ENCODE measurements at regions of chr4 and their contacts with region 1.

Region 1: DNA sequence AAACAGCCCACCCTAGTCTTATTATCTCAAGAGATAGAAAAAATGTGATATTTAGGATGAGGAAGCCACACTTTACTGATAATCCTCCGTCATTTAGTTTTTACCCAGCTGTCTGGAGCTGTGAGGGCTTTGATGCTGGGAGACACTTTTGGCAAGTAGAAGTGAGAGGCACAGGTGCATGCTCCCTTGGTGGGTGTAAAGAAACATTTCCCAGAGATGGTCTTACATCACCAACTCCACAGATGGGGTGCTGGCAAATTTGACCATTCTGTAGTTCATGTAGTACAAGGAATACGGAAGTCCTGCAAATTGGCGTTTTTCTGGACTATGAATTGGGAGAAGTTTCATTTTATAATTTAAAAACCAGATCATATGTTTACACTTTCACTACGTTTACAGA is 28.5 kb downstream of the TRIM61 start:
- DNase-seq: no peak
- ATAC-seq: no peak
- H3K4me3 ChIP-seq: no peak overlapping the region
- H3K4me3 Mint-ChIP-seq: no peak overlapping the region
- H3K27ac ChIP-seq: no peak overlapping the region
- H3K27ac Mint-ChIP-seq: no peak overlapping the region
- H3K4me1 ChIP-seq: no peaks in the 10 kb centered on the region
- H3K4me1 Mint-ChIP-seq: no peaks in the 10 kb centered on the region
- H3K27me3 ChIP-seq: peaks cover 0 to 15% (median 7%) of the 10 kb centered on the region in 4 experiments
- H3K27me3 Mint-ChIP-seq: peaks cover 54% of the 10 kb centered on the region
- CTCF ChIP-seq: no peak

Region 2: DNA sequence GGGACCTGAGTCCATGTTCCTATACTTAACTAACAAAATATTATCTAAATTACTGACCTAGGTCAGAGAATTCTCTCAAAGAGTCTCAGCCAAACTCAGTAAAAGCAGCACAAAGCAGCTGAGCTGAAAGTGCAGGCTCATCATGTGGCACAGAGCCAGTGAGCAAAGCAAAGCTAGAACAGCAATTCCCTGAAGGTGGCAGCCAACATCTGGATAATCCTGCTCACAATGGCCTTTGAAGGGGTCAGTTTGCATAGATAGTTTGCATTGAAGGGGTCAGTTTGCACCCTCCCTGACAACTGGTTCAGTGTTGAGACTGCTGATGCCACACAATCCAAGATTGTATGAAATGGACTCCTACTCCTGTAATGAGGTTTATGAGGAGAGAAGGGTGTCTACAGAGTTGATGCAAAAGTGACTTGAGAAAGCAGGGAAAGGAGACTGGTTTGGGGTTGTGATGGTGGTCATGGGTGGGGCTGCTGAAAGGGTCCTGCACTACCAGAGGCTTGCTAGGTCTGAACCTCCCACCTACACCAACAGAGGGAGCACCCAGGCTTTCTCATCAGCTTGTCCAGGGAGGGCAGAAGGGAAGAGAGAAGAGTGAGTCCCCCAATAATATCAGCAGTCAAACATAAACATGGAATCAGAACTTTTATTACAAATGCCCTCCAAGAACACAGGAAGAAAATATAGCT is 11.3 kb before region 1 on chr4:
- CTCF ChIA-PET with region 1: no interaction called
- POLR2A ChIA-PET with region 1: no interaction called
- intact Hi-C with region 1: loop called (anchors 1 kb)
- DNase-seq: no peak
- ATAC-seq: no peak
- H3K4me3 ChIP-seq: no peak overlapping the region
- H3K4me3 Mint-ChIP-seq: no peak overlapping the region
- H3K27ac ChIP-seq: no peak overlapping the region
- H3K27ac Mint-ChIP-seq: no peak overlapping the region
- H3K4me1 ChIP-seq: no peaks in the 10 kb centered on the region
- H3K4me1 Mint-ChIP-seq: no peaks in the 10 kb centered on the region
- H3K27me3 ChIP-seq: peaks cover 0 to 3% (median 1%) of the 10 kb centered on the region in 4 experiments
- H3K27me3 Mint-ChIP-seq: peaks cover 35% of the 10 kb centered on the region
- CTCF ChIP-seq: no peak

Region 3: GRCh38 chr4:165505991-165506837 is 557.2 kb after region 1 on chr4:
- CTCF ChIA-PET with region 1: no interaction called
- POLR2A ChIA-PET with region 1: no interaction called
- intact Hi-C with region 1: no loop called
- DNase-seq: no peak
- ATAC-seq: no peak
- H3K4me3 ChIP-seq: no peak overlapping the region
- H3K4me3 Mint-ChIP-seq: no peak overlapping the region
- H3K27ac ChIP-seq: no peak overlapping the region
- H3K27ac Mint-ChIP-seq: no peak overlapping the region
- H3K4me1 ChIP-seq: no peaks in the 10 kb centered on the region
- H3K4me1 Mint-ChIP-seq: no peaks in the 10 kb centered on the region
- H3K27me3 ChIP-seq: peaks cover 0 to 3% (median 0%) of the 10 kb centered on the region in 4 experiments
- H3K27me3 Mint-ChIP-seq: peaks cover 6% of the 10 kb centered on the region
- CTCF ChIP-seq: no peak